AG04449 (cell line): ENCODE measurements at regions of chr17 and their contacts with region 1.

Region 1: GRCh38 chr17:82037113-82037888 is at the start of gene DCXR:
- DNase-seq: peak; percentile 49
- H3K4me3 ChIP-seq: peak within 1 kb of the TSS; percentile 72
- CTCF ChIP-seq: peak; percentile 96

Region 2: GRCh38 chr17:82051776-82052637 is 14.7 kb after region 1 on chr17 and contains the starts of genes GPS1 and RFNG:
- CTCF ChIA-PET with region 1: interaction called, 47 read pairs
- POLR2A ChIA-PET with region 1: interaction called, 5 read pairs
- DNase-seq: no peak
- H3K4me3 ChIP-seq: peak within 1 kb of the TSS; percentile 82
- CTCF ChIP-seq: no peak

Region 3: GRCh38 chr17:82212331-82213250 is 175.3 kb after region 1 on chr17 and contains the start of gene CCDC57:
- CTCF ChIA-PET with region 1: no interaction called
- POLR2A ChIA-PET with region 1: no interaction called
- DNase-seq: no peak
- H3K4me3 ChIP-seq: peak within 1 kb of the TSS; percentile 71
- CTCF ChIP-seq: no peak